Ascending aorta (tissue), 2 donors: ENCODE measurements at regions of chr6 and their contacts with region 1.

Region 1: DNA sequence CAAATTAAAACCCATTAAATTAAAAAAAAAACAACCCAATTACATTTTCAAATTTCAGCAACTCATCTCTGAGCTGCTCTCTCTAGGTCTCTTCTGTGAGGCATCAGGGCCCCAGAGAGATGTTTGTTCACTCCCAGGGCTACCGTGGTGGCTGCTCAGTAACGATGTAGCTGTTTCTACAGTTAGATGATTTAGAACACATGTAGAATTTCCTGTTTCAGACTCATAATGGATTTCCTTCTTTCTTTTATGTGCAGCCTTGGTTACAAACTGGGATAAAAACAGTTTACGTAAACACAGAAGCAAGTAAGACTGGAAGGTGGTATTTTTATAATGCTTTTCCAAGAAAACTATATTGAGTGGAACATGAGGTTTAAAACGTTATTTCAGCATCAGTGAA is 116.1 kb upstream of the CCN2 start:
- DNase-seq: no peak
- H3K4me3 ChIP-seq: no peak overlapping the region
- H3K27ac ChIP-seq: no peak overlapping the region
- H3K4me1 ChIP-seq: no peaks in the 10 kb centered on the region
- H3K27me3 ChIP-seq: no peaks in the 10 kb centered on the region
- CTCF ChIP-seq: no peak

Region 2: GRCh38 chr6:131937703-131938631 is 129.3 kb before region 1 on chr6:
- intact Hi-C with region 1: no loop called
- DNase-seq: no peak
- H3K4me3 ChIP-seq: no peak overlapping the region
- H3K27ac ChIP-seq: no peak overlapping the region
- H3K4me1 ChIP-seq: no peaks in the 10 kb centered on the region
- H3K27me3 ChIP-seq: no peaks in the 10 kb centered on the region
- CTCF ChIP-seq: no peak

Region 3: GRCh38 chr6:132025468-132025867 is 41.8 kb before region 1 on chr6:
- intact Hi-C with region 1: loop called (anchors 5 kb)
- DNase-seq: no peak
- H3K4me3 ChIP-seq: no peak overlapping the region
- H3K27ac ChIP-seq: no peak overlapping the region
- H3K4me1 ChIP-seq: peaks cover 0 to 4% of the 10 kb centered on the region in 2 donors
- H3K27me3 ChIP-seq: no peaks in the 10 kb centered on the region
- CTCF ChIP-seq: no peak

Region 4: GRCh38 chr6:132122871-132123270 is 55.6 kb after region 1 on chr6:
- intact Hi-C with region 1: no loop called
- DNase-seq: no peak
- H3K4me3 ChIP-seq: no peak overlapping the region
- H3K27ac ChIP-seq: no peak overlapping the region
- H3K4me1 ChIP-seq: peaks cover 0 to 2% of the 10 kb centered on the region in 2 donors
- H3K27me3 ChIP-seq: no peaks in the 10 kb centered on the region
- CTCF ChIP-seq: no peak